ENCODE measurements at regions of chr10 and their contacts with region 1.

Region 1: GRCh38 chr10:125160856-125161706 is 718 bp upstream of the CTBP2 start:
- DNase-seq: peak; percentile 92 to 94
- H3K4me3 ChIP-seq: peak overlapping the region; percentile 88
- H3K4me3 Mint-ChIP-seq: peak overlapping the region; percentile 86
- H3K27ac Mint-ChIP-seq: peak overlapping the region; percentile 94
- H3K4me1 ChIP-seq: peaks cover 10% of the 10 kb centered on the region
- H3K4me1 Mint-ChIP-seq: peaks cover 23% of the 10 kb centered on the region
- H3K27me3 ChIP-seq: no peaks in the 10 kb centered on the region
- H3K27me3 Mint-ChIP-seq: no peaks in the 10 kb centered on the region
- CTCF ChIP-seq: peak; percentile 50 to 75

Region 2: GRCh38 chr10:125048101-125048864 is 112.8 kb before region 1 on chr10:
- CTCF ChIA-PET with region 1: interaction called, 10 read pairs
- POLR2A ChIA-PET with region 1: interaction called, 3 read pairs
- intact Hi-C with region 1: loop called (anchors 5 kb)
- DNase-seq: peak; percentile 86 to 93
- H3K4me3 ChIP-seq: no peak overlapping the region
- H3K4me3 Mint-ChIP-seq: peak overlapping the region; percentile 42
- H3K27ac Mint-ChIP-seq: peak overlapping the region; percentile 78
- H3K4me1 ChIP-seq: peaks cover 41% of the 10 kb centered on the region
- H3K4me1 Mint-ChIP-seq: peaks cover 22% of the 10 kb centered on the region
- H3K27me3 ChIP-seq: no peaks in the 10 kb centered on the region
- H3K27me3 Mint-ChIP-seq: no peaks in the 10 kb centered on the region
- CTCF ChIP-seq: peak; percentile 93 to 97

Region 3: GRCh38 chr10:125263555-125263954 is 102.5 kb after region 1 on chr10:
- CTCF ChIA-PET with region 1: no interaction called
- POLR2A ChIA-PET with region 1: no interaction called
- intact Hi-C with region 1: loop called (anchors 10 kb)
- DNase-seq: peak; percentile 48 to 66
- H3K4me3 ChIP-seq: no peak overlapping the region
- H3K4me3 Mint-ChIP-seq: peak overlapping the region; percentile 32
- H3K27ac Mint-ChIP-seq: peak overlapping the region; percentile 91
- H3K4me1 ChIP-seq: peaks cover 28% of the 10 kb centered on the region
- H3K4me1 Mint-ChIP-seq: peaks cover 35% of the 10 kb centered on the region
- H3K27me3 ChIP-seq: no peaks in the 10 kb centered on the region
- H3K27me3 Mint-ChIP-seq: no peaks in the 10 kb centered on the region
- CTCF ChIP-seq: no peak

Region 4: DNA sequence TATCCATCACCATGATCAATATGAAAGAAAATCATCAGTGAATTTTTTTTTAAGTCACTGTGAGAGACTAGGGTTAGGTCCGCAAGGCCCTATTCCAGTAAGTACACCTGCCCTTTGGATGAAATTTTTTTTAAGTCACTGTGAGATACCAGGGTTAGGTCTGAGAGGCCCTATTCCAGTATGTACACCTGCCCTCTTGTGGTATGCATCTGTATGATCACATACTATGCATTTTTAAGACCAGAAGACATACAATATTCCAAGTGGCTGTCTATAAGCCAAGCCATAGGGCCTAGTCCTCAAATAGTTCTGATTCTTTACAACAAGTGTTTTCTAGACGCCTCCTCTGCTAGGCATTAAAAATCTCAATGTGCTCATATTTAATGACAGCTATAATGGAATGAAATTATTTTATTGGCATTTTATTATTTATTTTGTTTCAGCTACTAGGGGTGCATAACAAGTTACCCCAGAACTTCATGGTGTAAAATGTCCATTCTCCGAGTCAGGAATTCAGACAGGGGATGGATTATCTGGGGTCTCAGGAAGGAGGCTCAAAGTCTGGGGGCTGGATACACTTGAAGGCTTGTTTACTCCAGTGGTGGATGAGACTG is 468.8 kb after region 1 on chr10:
- CTCF ChIA-PET with region 1: no interaction called
- POLR2A ChIA-PET with region 1: no interaction called
- intact Hi-C with region 1: loop called (anchors 2 kb)
- DNase-seq: peak in 1 of 2 experiments; percentile 57
- H3K4me3 ChIP-seq: no peak overlapping the region
- H3K4me3 Mint-ChIP-seq: no peak overlapping the region
- H3K27ac Mint-ChIP-seq: no peak overlapping the region
- H3K4me1 ChIP-seq: no peaks in the 10 kb centered on the region
- H3K4me1 Mint-ChIP-seq: no peaks in the 10 kb centered on the region
- H3K27me3 ChIP-seq: no peaks in the 10 kb centered on the region
- H3K27me3 Mint-ChIP-seq: peaks cover 25% of the 10 kb centered on the region
- CTCF ChIP-seq: peak; percentile 59 to 74

Region 5: GRCh38 chr10:125719146-125720001 is 558.3 kb after region 1 on chr10 and contains the start of gene EDRF1:
- CTCF ChIA-PET with region 1: no interaction called
- POLR2A ChIA-PET with region 1: interaction called, 11 read pairs
- intact Hi-C with region 1: no loop called
- DNase-seq: peak; percentile 99
- H3K4me3 ChIP-seq: peak within 1 kb of the TSS; percentile 75
- H3K4me3 Mint-ChIP-seq: peak within 1 kb of the TSS; percentile 82
- H3K27ac Mint-ChIP-seq: peak within 1 kb of the TSS; percentile 97
- H3K4me1 ChIP-seq: peaks cover 5% of the 10 kb centered on the region; the same call in 1 of the 2 replicates
- H3K4me1 Mint-ChIP-seq: no peaks in the 10 kb centered on the region
- H3K27me3 ChIP-seq: no peaks in the 10 kb centered on the region
- H3K27me3 Mint-ChIP-seq: no peaks in the 10 kb centered on the region
- CTCF ChIP-seq: no peak
- total RNA-seq, gene EDRF1: 40.9 and 43.2 TPM in 2 replicates